Ovary (tissue), 10 donors: ENCODE measurements at regions of chr9 and their contacts with region 1.

Region 1: GRCh38 chr9:135961277-135961705 is at the start of gene UBAC1:
- DNase-seq: peak; percentile 94 to 97 (median 95)
- H3K4me3 ChIP-seq: peak within 1 kb of the TSS; percentile 98
- H3K27ac ChIP-seq: peak within 1 kb of the TSS; percentile 39 to 42
- H3K4me1 ChIP-seq: peaks cover 4% of the 10 kb centered on the region
- H3K27me3 ChIP-seq: no peaks in the 10 kb centered on the region
- CTCF ChIP-seq: peak in 2 of 3 donors; percentile 78 to 92
- EP300 ChIP-seq: peak; percentile 56
- POLR2A ChIP-seq: no peak
- total RNA-seq, gene UBAC1: 29.4 to 42.0 (median 34.9) TPM

Region 2: GRCh38 chr9:135602789-135603481 is 358.4 kb before region 1 on chr9:
- intact Hi-C with region 1: loop called in 2 of 4 experiments (anchors 5 kb)
- DNase-seq: peak in 1 of 5 donors; percentile 24
- H3K4me3 ChIP-seq: no peak overlapping the region
- H3K27ac ChIP-seq: no peak overlapping the region
- H3K4me1 ChIP-seq: peaks cover 4% of the 10 kb centered on the region
- H3K27me3 ChIP-seq: no peaks in the 10 kb centered on the region
- CTCF ChIP-seq: peak in 2 of 3 donors; percentile 50 to 55
- EP300 ChIP-seq: no peak
- POLR2A ChIP-seq: no peak

Region 3: DNA sequence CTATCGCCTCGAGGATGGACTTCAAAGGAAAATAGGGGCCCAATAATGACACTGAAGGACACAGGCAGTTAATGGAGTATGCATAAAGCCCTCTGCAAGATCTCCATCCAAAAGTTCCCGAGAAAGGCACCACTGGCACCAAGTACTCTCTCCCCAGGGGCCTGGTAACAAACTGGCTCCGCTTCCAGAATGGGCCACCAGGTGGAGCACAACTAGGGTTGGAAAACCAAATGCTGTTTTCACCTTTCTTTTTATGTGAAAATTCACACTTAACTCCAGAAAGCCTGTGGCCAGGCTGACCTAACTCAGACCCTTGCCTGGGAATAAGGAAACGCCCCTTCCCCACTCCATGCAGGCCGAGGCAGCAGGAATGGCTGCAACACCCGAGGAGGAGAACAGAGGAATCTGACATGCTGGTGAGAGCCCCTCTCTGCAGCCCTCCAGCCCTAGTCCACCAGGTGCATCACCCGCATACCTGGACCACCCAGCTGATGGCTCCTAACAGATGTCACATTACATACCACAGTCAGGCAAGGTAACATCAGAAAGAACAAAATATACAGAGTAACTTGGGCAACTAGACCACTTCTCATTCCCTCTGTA is 96.7 kb before region 1 on chr9:
- intact Hi-C with region 1: loop called in 2 of 4 experiments (anchors 10 kb)
- DNase-seq: peak; percentile 42 to 75 (median 71)
- H3K4me3 ChIP-seq: no peak overlapping the region
- H3K27ac ChIP-seq: no peak overlapping the region
- H3K4me1 ChIP-seq: peaks cover 2% of the 10 kb centered on the region
- H3K27me3 ChIP-seq: no peaks in the 10 kb centered on the region
- CTCF ChIP-seq: peak in 2 of 3 donors; percentile 37 to 56
- EP300 ChIP-seq: no peak
- POLR2A ChIP-seq: no peak

Region 4: GRCh38 chr9:136245219-136246150 is 284.2 kb after region 1 on chr9 and contains the start of gene QSOX2:
- intact Hi-C with region 1: loop called in 1 of 4 experiments (anchors 10 kb)
- DNase-seq: peak; percentile 79 to 90 (median 88)
- H3K4me3 ChIP-seq: peak within 1 kb of the TSS; percentile 84
- H3K27ac ChIP-seq: no peak within 1 kb of the TSS
- H3K4me1 ChIP-seq: peaks cover 6% of the 10 kb centered on the region
- H3K27me3 ChIP-seq: no peaks in the 10 kb centered on the region
- CTCF ChIP-seq: no peak
- EP300 ChIP-seq: no peak
- POLR2A ChIP-seq: no peak
- total RNA-seq, gene QSOX2: 7.5 to 14.3 (median 10.0) TPM

Region 5: DNA sequence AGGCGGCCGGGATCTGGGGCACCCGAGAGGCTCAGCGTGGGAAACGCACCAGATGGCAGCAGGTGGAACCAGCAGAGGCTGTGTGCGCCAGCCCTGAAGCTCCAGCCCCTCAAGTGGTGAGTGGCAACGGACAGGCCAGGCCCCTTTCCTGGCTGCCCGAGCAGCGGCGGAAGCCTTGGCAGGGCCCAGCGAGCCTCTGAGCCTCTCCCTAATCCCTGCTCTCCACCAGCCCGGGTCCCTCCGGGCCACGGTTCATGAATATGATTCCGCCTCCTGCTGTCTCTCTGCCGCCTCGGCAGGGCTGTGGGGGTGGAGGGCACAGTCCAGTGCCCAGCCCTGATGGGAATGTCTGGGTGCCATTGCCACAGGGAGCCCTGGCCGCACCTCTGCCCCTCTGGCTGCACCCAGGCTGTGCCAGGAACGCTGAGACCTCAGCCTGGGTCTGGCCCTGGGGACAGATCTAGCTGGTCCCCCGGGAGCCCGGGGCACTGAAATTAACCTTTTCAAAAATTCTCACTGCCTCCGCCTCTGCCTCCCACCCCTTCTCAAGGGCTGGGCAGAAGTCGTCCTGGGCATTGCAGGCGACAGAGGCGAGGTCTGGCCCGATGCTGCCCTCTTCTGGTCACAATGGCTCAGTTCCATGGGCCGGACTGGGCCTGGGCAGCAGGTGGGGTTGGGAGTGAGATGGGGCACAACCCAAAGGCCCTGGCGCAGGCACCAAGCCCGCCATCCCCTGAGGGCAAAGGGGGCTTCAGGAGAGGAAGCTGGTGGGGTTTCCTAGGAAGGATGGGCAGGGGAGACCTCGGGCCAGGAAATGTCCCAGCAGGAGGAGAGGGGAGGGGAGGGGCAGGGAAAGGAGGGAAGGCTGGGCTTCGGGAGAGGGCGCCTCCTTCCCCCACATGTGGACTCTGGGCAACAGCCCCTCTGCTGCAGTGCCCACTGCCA is 322.3 kb after region 1 on chr9:
- intact Hi-C with region 1: loop called in 2 of 4 experiments (anchors 5 to 10 kb)
- DNase-seq: peak; percentile 67 to 84 (median 76)
- H3K4me3 ChIP-seq: no peak overlapping the region
- H3K27ac ChIP-seq: no peak overlapping the region
- H3K4me1 ChIP-seq: no peaks in the 10 kb centered on the region
- H3K27me3 ChIP-seq: no peaks in the 10 kb centered on the region
- CTCF ChIP-seq: peak; percentile 63 to 75 (median 68)
- EP300 ChIP-seq: no peak
- POLR2A ChIP-seq: no peak

Region 6: GRCh38 chr9:136392538-136393449 is 431.5 kb after region 1 on chr9:
- intact Hi-C with region 1: no loop called
- DNase-seq: no peak
- H3K4me3 ChIP-seq: no peak overlapping the region
- H3K27ac ChIP-seq: no peak overlapping the region
- H3K4me1 ChIP-seq: no peaks in the 10 kb centered on the region
- H3K27me3 ChIP-seq: no peaks in the 10 kb centered on the region
- CTCF ChIP-seq: no peak
- EP300 ChIP-seq: no peak
- POLR2A ChIP-seq: no peak